Calu3 (cell line): ENCODE measurements at regions of chrX and their contacts with region 1.

Region 1: GRCh38 chrX:11533211-11533651 is 132.5 kb downstream of the ARHGAP6 start:
- DNase-seq: no peak
- H3K4me3 Mint-ChIP-seq: no peak overlapping the region
- H3K27ac Mint-ChIP-seq: no peak overlapping the region
- H3K4me1 Mint-ChIP-seq: no peaks in the 10 kb centered on the region
- H3K27me3 Mint-ChIP-seq: peaks cover 9% of the 10 kb centered on the region
- CTCF ChIP-seq: peak; percentile 49

Region 2: GRCh38 chrX:11381464-11381863 is 151.8 kb before region 1 on chrX:
- CTCF ChIA-PET with region 1: no interaction called
- intact Hi-C with region 1: loop called (anchors 2 kb)
- DNase-seq: peak; percentile 55
- H3K4me3 Mint-ChIP-seq: no peak overlapping the region
- H3K27ac Mint-ChIP-seq: no peak overlapping the region
- H3K4me1 Mint-ChIP-seq: peaks cover 12% of the 10 kb centered on the region
- H3K27me3 Mint-ChIP-seq: no peaks in the 10 kb centered on the region
- CTCF ChIP-seq: peak; percentile 49

Region 3: GRCh38 chrX:11724122-11725017 is 191.1 kb after region 1 on chrX:
- CTCF ChIA-PET with region 1: no interaction called
- intact Hi-C with region 1: loop called (anchors 1 kb)
- DNase-seq: peak; percentile 17
- H3K4me3 Mint-ChIP-seq: no peak overlapping the region
- H3K27ac Mint-ChIP-seq: no peak overlapping the region
- H3K4me1 Mint-ChIP-seq: no peaks in the 10 kb centered on the region
- H3K27me3 Mint-ChIP-seq: no peaks in the 10 kb centered on the region
- CTCF ChIP-seq: no peak

Region 4: DNA sequence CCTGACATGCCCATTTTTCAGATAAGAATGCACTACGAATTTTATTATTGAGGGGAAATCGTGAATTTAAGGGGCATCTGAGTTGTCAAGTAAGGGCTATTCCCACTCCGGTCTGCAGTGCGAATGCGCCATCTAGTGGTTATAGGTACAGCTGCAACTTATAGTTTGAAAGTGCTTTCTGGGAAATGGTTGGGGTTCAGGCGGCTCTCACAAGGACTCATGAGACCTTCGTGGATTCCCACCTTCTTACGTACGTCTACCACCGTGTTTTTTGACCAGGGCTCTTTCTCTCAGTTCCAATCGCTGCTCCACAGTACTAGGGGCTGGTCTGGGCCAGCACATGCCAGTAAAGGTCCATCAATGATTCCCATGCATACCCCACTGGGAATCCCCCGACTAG is 237.1 kb after region 1 on chrX:
- CTCF ChIA-PET with region 1: interaction called, 3 read pairs
- intact Hi-C with region 1: loop called (anchors 1 kb)
- DNase-seq: peak; percentile 9
- H3K4me3 Mint-ChIP-seq: no peak overlapping the region
- H3K27ac Mint-ChIP-seq: no peak overlapping the region
- H3K4me1 Mint-ChIP-seq: no peaks in the 10 kb centered on the region
- H3K27me3 Mint-ChIP-seq: no peaks in the 10 kb centered on the region
- CTCF ChIP-seq: peak; percentile 70

Region 5: DNA sequence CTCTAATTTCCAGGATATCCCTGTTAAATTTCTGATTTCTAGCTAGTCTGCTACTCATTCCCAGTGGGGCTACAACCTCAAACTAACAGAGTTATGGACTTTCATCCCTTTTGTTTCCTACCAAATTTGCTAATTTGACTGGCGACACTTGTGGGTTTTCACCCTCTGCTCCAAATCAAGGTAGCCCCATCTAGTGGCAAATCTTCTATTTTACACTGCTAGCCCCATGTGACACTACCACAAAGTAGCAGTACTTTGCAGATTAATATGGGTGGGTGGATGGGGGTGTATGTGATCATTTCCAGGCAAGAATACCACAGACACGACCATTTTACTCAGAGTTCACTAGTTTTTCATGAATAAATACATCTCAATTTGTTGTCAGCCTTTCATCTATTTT is 375.1 kb after region 1 on chrX:
- CTCF ChIA-PET with region 1: no interaction called
- intact Hi-C with region 1: loop called (anchors 1 kb)
- DNase-seq: peak; percentile 38
- H3K4me3 Mint-ChIP-seq: no peak overlapping the region
- H3K27ac Mint-ChIP-seq: no peak overlapping the region
- H3K4me1 Mint-ChIP-seq: peaks cover 9% of the 10 kb centered on the region
- H3K27me3 Mint-ChIP-seq: no peaks in the 10 kb centered on the region
- CTCF ChIP-seq: no peak

Region 6: DNA sequence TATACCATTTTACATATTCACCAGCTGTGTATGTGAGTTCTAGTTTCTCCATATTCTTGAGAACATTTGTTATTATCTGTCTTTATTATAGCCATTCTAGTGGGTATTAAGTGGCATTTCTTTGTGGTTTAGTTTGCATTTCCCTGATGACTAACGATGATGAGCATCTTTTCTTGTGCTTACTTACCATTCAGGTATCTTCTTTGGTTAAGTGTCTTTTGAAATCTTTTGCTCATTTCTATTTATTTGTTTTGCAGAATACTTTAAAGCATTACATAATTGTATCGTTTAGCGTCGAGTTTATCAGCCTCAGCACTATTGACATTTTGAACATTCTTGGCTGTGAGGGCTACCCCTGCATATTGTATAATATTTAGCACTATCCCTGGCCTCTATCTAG is 690.4 kb after region 1 on chrX:
- CTCF ChIA-PET with region 1: no interaction called
- intact Hi-C with region 1: no loop called
- DNase-seq: no peak
- H3K4me3 Mint-ChIP-seq: no peak overlapping the region
- H3K27ac Mint-ChIP-seq: no peak overlapping the region
- H3K4me1 Mint-ChIP-seq: no peaks in the 10 kb centered on the region
- H3K27me3 Mint-ChIP-seq: peaks cover 9% of the 10 kb centered on the region
- CTCF ChIP-seq: no peak